Breast epithelium (tissue), 4 donors: ENCODE measurements at regions of chr11 and their contacts with region 1.

Region 1: GRCh38 chr11:11659567-11660362 is 38.0 kb upstream of the GALNT18 start:
- DNase-seq: no peak
- H3K4me3 ChIP-seq: no peak overlapping the region
- H3K27ac ChIP-seq: no peak overlapping the region
- H3K4me1 ChIP-seq: no peaks in the 10 kb centered on the region
- H3K27me3 ChIP-seq: peaks cover 0 to 13% of the 10 kb centered on the region in 2 donors
- CTCF ChIP-seq: no peak
- POLR2A ChIP-seq: no peak

Region 2: GRCh38 chr11:11000579-11001283 is 659.0 kb before region 1 on chr11:
- intact Hi-C with region 1: loop called (anchors 10 kb)
- DNase-seq: no peak
- H3K4me3 ChIP-seq: no peak overlapping the region
- H3K27ac ChIP-seq: no peak overlapping the region
- H3K4me1 ChIP-seq: no peaks in the 10 kb centered on the region
- H3K27me3 ChIP-seq: no peaks in the 10 kb centered on the region
- CTCF ChIP-seq: no peak
- POLR2A ChIP-seq: no peak

Region 3: DNA sequence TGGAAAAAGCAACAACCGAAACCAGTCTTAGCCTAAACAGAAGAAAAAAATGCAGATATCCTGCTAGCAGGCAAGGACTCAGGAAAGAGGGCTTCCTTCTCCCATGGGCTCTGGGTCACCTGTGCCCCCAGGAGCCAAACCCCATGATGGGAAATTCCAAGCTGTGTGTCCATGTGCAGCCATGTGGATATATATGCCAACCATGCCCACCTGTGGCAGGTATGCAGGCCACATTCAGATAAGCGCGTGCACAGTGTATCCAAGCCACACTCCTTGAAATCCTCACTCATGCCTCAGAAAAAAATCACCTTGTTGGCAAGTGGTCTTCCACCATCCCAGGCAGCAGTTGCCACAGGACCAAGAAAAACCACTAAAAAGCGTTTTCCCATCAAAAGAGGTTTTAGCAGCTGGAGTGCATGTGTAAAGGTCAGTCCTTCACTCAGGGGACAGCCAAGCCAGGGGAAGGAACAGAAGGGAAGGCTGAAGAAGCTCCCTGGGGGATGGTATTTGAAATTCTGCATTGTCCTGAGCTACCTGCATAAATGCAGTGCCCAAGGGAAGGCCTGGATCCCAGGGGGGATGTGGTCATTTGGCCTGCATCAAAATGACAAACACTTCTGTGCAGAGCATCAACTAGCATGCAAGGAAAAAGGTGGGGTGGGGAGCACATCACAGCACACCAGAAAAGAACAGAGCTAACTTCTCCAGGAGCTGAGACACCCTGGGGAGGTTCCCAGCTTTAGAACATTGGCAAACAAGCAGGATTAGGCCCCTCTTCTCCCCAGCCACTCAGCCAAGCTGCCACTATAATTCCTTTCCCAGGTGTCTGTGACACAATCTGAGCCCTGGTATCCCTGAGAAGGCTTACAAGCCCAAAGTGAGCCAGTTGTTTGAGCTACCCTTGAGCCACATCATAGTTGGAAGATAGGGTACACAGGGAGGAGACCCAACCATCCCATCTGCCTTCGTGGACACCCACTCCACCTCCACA is 114.2 kb before region 1 on chr11:
- intact Hi-C with region 1: no loop called
- DNase-seq: no peak
- H3K4me3 ChIP-seq: no peak overlapping the region
- H3K27ac ChIP-seq: no peak overlapping the region
- H3K4me1 ChIP-seq: no peaks in the 10 kb centered on the region
- H3K27me3 ChIP-seq: no peaks in the 10 kb centered on the region
- CTCF ChIP-seq: no peak
- POLR2A ChIP-seq: no peak